ENCODE measurements at regions of chr18 and their contacts with region 1.

Region 1: GRCh38 chr18:74896390-74896991 is 298.8 kb downstream of the ZNF407 start:
- DNase-seq: peak; percentile 16
- H3K4me3 ChIP-seq: no peak overlapping the region
- H3K27ac ChIP-seq: no peak overlapping the region
- H3K4me1 ChIP-seq: peaks cover 12% of the 10 kb centered on the region
- H3K27me3 ChIP-seq: no peaks in the 10 kb centered on the region
- CTCF ChIP-seq: no peak
- POLR2A ChIP-seq: no peak

Region 2: GRCh38 chr18:74778191-74778847 is 118.2 kb before region 1 on chr18:
- CTCF ChIA-PET with region 1: no interaction called
- POLR2A ChIA-PET with region 1: no interaction called
- dilution Hi-C with region 1: no loop called
- intact Hi-C with region 1: no loop called
- DNase-seq: no peak
- H3K4me3 ChIP-seq: no peak overlapping the region
- H3K27ac ChIP-seq: no peak overlapping the region
- H3K4me1 ChIP-seq: no peaks in the 10 kb centered on the region
- H3K27me3 ChIP-seq: no peaks in the 10 kb centered on the region
- CTCF ChIP-seq: no peak
- POLR2A ChIP-seq: no peak

Region 3: GRCh38 chr18:74929110-74929509 is 32.6 kb after region 1 on chr18:
- CTCF ChIA-PET with region 1: no interaction called
- POLR2A ChIA-PET with region 1: no interaction called
- dilution Hi-C with region 1: no loop called
- intact Hi-C with region 1: no loop called
- DNase-seq: peak; percentile 42
- H3K4me3 ChIP-seq: no peak overlapping the region
- H3K27ac ChIP-seq: no peak overlapping the region
- H3K4me1 ChIP-seq: no peaks in the 10 kb centered on the region
- H3K27me3 ChIP-seq: no peaks in the 10 kb centered on the region
- CTCF ChIP-seq: no peak
- POLR2A ChIP-seq: no peak

Region 4: GRCh38 chr18:75198036-75198435 is 301.5 kb after region 1 on chr18:
- CTCF ChIA-PET with region 1: no interaction called
- POLR2A ChIA-PET with region 1: no interaction called
- dilution Hi-C with region 1: no loop called
- intact Hi-C with region 1: loop called (anchors 5 kb)
- DNase-seq: no peak
- H3K4me3 ChIP-seq: no peak overlapping the region
- H3K27ac ChIP-seq: no peak overlapping the region
- H3K4me1 ChIP-seq: peaks cover 25% of the 10 kb centered on the region
- H3K27me3 ChIP-seq: no peaks in the 10 kb centered on the region
- CTCF ChIP-seq: no peak
- POLR2A ChIP-seq: no peak

Measured in endothelial cell of umbilical vein (primary cell).